ENCODE measurements at regions of chr1 and their contacts with region 1.

Region 1: DNA sequence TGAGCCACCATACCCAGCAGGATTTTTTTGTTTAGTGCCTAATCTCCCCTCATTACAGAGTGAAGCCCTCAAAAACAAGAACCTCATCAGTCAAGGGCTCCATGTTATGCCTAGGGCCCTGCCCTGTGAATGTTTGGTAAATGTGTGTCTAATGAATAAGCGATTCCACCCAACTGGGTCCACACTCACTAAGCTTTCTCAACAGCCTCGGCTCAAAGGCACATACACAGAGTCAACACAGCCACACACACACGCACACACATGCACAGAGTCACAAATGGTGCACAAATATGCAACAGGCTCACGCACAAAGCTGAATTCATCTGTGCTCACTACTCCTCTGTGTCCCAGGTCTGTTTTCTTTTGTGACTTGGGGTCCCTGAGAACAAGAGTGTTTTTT is 11.7 kb upstream of the SYNC start:
- DNase-seq: no peak
- H3K4me3 ChIP-seq: no peak overlapping the region
- H3K27ac ChIP-seq: no peak overlapping the region
- H3K4me1 ChIP-seq: peaks cover 0 to 8% (median 7%) of the 10 kb centered on the region in 3 donors
- H3K27me3 ChIP-seq: no peaks in the 10 kb centered on the region
- CTCF ChIP-seq: no peak

Region 2: DNA sequence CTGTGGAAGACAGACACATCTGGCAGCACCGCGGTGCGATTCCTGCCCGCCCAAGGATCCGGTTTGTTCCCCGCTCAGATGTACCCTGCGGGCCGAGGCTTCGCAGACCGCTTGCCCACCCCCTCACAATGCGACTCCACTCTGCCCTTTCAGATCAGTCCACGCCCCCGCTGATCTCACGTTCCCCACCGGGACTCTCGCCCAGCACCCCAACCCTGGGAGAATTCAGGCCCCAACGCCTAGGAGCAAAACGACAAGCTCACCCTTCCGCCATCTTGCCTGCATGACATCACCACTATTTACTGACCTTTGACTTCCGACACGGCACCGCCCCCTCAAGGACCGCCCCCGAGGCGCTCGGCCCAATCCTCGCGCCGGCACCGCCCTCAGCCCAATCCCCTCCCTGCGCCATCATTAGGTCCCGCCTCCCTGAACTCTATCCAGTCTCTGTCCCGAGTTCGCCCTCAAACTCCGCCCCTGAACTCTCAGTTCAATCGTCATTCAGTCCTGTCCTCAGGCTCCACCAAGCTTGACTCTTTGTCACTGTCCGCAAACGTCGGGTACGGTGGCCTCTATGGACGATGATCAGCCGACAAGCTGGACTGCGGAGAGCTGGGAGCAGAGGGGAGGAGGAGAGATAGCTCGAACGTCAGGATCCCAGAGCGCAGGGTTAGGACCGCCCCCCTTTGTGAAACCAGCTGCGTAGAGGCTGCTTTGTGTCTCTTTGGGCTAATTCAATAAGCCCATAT is 320.0 kb before region 1 on chr1 and contains the start of gene BSDC1:
- intact Hi-C with region 1: no loop called
- DNase-seq: peak; percentile 99 to 100 (median 99)
- H3K4me3 ChIP-seq: peak within 1 kb of the TSS; percentile 86 to 96 (median 94)
- H3K27ac ChIP-seq: peak within 1 kb of the TSS; percentile 86 to 95
- H3K4me1 ChIP-seq: peaks cover 0 to 11% (median 7%) of the 10 kb centered on the region in 3 donors
- H3K27me3 ChIP-seq: no peaks in the 10 kb centered on the region
- CTCF ChIP-seq: no peak
- total RNA-seq, gene BSDC1: 61.7 TPM

Region 3: DNA sequence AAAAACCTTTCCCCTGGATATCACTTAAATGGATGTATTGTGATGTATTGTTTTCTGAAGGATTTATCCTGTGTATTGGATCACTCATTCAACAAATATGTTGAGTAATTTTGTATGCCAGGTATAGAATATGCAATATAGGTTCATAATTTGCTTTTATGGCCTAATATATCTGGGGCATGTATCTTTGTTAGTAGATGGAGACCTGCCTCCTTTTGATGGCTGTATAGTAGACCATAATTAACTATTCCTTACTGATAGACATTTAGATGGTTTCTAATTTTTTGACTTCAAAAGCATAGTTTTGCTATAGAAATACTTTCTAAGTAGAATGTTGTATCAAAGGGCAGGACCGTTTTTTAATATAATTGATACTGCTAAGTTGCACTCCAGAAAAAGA is 54.7 kb before region 1 on chr1:
- intact Hi-C with region 1: no loop called
- DNase-seq: no peak
- H3K4me3 ChIP-seq: no peak overlapping the region
- H3K27ac ChIP-seq: no peak overlapping the region
- H3K4me1 ChIP-seq: no peaks in the 10 kb centered on the region
- H3K27me3 ChIP-seq: no peaks in the 10 kb centered on the region
- CTCF ChIP-seq: no peak

Region 4: DNA sequence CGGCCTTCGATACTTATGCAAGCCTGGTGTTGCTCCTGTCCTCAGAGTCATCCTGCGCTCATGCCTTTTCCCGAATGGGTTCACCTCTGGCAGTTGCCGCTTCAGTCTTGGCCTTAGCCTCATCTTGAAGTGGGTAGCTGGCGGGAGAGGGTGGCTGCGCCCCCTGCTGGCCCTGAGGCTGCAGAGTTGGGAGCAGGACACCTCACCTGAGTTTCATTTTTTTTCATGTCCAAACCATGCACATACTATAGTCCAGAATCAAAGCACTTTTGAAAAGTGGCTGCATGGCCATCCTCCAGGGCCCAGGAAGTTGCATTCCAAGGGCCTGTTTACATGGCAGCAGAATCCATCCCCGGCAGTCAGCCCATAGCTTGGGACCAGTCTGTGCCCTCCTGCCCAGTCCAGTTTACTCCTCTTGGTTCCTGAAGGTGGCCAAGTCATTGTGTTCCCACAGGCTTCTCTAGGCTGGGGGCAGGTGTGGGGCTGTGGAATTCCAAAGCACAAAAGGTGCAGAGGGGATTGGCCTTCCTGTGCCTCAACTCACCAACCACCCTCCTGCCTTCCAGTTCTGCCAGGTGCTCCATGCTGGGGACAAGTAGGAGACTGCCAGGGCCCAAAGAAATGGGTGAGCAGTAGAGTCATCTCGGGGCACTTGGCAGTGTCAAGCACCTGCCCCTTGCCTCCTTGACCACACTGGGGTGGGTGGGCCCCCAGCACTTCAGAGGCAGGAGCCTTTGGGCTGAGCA is 58.9 kb after region 1 on chr1:
- intact Hi-C with region 1: loop called (anchors 5 kb)
- DNase-seq: peak; percentile 86 to 91 (median 91)
- H3K4me3 ChIP-seq: no peak overlapping the region
- H3K27ac ChIP-seq: no peak overlapping the region
- H3K4me1 ChIP-seq: no peaks in the 10 kb centered on the region
- H3K27me3 ChIP-seq: no peaks in the 10 kb centered on the region
- CTCF ChIP-seq: peak; percentile 89

Region 5: GRCh38 chr1:33181921-33182341 is 467.7 kb after region 1 on chr1 and contains the start of gene TRIM62:
- intact Hi-C with region 1: no loop called
- DNase-seq: peak; percentile 91 to 97 (median 96)
- H3K4me3 ChIP-seq: peak within 1 kb of the TSS; percentile 60 to 70 (median 66)
- H3K27ac ChIP-seq: peak within 1 kb of the TSS; percentile 13 to 29
- H3K4me1 ChIP-seq: peaks cover 0 to 17% (median 9%) of the 10 kb centered on the region in 3 donors
- H3K27me3 ChIP-seq: no peaks in the 10 kb centered on the region
- CTCF ChIP-seq: no peak
- total RNA-seq, gene TRIM62: 6.2 TPM

Measured in kidney (tissue), 22 donors.